ENCODE measurements at regions of chr19 and their contacts with region 1.

Region 1: DNA sequence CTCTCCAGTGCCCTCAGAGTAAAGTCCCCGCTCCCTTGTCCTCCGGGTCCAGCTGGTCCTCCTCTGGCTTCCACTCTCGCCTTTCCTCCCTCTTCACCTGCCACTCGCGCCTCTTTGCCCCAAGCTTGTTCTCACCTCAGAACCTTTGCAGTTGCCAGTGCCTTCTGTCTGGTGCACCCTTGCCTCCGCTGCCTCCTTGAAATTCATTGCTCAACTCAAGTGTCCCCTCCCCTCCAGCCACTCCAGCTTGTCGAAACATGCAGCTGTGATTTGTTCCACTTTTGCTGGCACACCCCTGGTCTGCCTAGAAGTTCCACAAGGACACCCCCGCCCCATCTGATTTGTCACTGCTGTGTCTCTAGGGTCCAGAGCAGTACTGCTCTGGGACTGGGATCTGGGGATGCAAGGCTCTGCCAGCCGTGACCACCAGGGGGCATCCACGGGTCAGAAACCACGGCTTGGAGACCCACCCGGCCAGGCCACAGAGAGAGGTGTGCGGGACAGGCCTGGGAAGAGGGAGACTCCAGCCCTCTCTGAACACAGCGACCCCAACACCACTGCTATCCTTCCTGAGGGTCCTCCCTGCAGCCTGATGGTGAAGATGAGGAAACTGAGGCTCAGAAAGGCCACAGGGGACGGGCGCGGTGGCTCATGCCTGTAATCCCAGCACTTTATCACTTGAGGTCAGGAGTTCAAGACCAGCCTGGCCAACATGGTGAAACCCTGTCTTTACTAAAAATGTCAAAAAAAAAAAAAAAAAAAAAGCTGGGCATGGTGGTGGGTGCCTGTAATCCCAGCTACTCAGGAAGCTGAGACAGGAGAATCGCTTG is 49.9 kb downstream of the AP1M1 start:
- DNase-seq: peak; percentile 87
- ATAC-seq: peak; percentile 96
- H3K4me3 Mint-ChIP-seq: no peak overlapping the region
- H3K27ac Mint-ChIP-seq: peak overlapping the region; percentile 26
- H3K4me1 Mint-ChIP-seq: peaks cover 21% of the 10 kb centered on the region
- H3K27me3 Mint-ChIP-seq: peaks cover 15% of the 10 kb centered on the region

Region 2: GRCh38 chr19:16262618-16263017 is 15.1 kb after region 1 on chr19:
- CTCF ChIA-PET with region 1: interaction called, 12 read pairs
- POLR2A ChIA-PET with region 1: no interaction called
- DNase-seq: no peak
- ATAC-seq: no peak
- H3K4me3 Mint-ChIP-seq: peak overlapping the region; percentile 63
- H3K27ac Mint-ChIP-seq: peak overlapping the region; percentile 87
- H3K4me1 Mint-ChIP-seq: peaks cover 85% of the 10 kb centered on the region
- H3K27me3 Mint-ChIP-seq: peaks cover 24% of the 10 kb centered on the region

Region 3: GRCh38 chr19:16293118-16294091 is 45.8 kb after region 1 on chr19:
- CTCF ChIA-PET with region 1: no interaction called
- POLR2A ChIA-PET with region 1: no interaction called
- DNase-seq: no peak
- ATAC-seq: no peak
- H3K4me3 Mint-ChIP-seq: no peak overlapping the region
- H3K27ac Mint-ChIP-seq: no peak overlapping the region
- H3K4me1 Mint-ChIP-seq: peaks cover 12% of the 10 kb centered on the region
- H3K27me3 Mint-ChIP-seq: peaks cover 16% of the 10 kb centered on the region

Region 4: GRCh38 chr19:16330368-16330801 is 82.8 kb after region 1 on chr19:
- CTCF ChIA-PET with region 1: interaction called, 25 read pairs
- POLR2A ChIA-PET with region 1: interaction called, 5 read pairs
- DNase-seq: peak; percentile 94
- ATAC-seq: peak; percentile 69
- H3K4me3 Mint-ChIP-seq: peak overlapping the region; percentile 91
- H3K27ac Mint-ChIP-seq: peak overlapping the region; percentile 82
- H3K4me1 Mint-ChIP-seq: peaks cover 64% of the 10 kb centered on the region
- H3K27me3 Mint-ChIP-seq: peaks cover 25% of the 10 kb centered on the region

Region 5: DNA sequence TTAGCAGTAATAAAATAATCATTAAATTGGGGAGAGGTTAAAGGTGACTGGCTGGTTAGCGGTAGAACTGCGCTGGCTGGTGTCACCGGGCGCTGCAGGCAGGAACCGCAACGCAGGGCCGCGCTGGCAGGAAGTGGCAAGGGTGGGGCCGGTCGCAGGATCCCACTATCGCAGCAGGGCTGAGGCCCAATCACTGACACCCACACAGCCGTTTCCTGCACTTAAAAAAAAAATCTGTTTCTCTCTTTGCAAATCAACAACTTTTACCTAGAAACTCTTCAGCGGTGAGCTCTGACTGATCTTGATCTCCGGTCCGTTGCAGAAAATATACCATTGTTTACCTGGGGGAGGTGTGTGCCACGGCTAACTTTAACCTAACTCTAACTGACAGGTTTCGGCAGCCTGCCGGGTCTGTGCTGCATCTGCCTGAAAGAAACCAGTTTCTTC is 124.0 kb after region 1 on chr19:
- CTCF ChIA-PET with region 1: interaction called, 27 read pairs
- POLR2A ChIA-PET with region 1: interaction called, 4 read pairs
- DNase-seq: peak; percentile 96
- ATAC-seq: peak; percentile 70
- H3K4me3 Mint-ChIP-seq: no peak overlapping the region
- H3K27ac Mint-ChIP-seq: no peak overlapping the region
- H3K4me1 Mint-ChIP-seq: peaks cover 40% of the 10 kb centered on the region
- H3K27me3 Mint-ChIP-seq: peaks cover 3% of the 10 kb centered on the region

Region 6: DNA sequence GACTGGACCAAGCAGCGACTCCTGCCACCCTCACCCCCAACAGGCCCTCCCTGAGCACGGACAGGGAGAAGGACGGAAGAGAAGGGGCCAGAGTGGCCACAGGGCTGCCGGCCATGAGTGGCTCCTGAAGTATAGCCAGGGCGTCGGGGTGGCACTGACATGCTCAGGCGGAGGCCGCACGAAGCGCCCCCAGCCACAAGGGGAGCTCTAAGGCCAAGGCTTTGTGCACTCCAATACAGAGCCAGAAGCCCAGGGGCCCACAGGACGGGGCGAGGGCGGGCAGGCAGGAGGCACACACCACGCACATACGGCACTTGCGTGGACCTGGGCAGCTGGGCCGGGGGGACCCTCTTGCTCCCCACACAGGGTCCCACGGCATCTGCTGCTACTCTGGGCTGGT is 129.1 kb after region 1 on chr19:
- CTCF ChIA-PET with region 1: interaction called, 120 read pairs
- POLR2A ChIA-PET with region 1: interaction called, 4 read pairs
- DNase-seq: peak; percentile 46
- ATAC-seq: no peak
- H3K4me3 Mint-ChIP-seq: no peak overlapping the region
- H3K27ac Mint-ChIP-seq: peak overlapping the region; percentile 44
- H3K4me1 Mint-ChIP-seq: peaks cover 54% of the 10 kb centered on the region
- H3K27me3 Mint-ChIP-seq: no peaks in the 10 kb centered on the region

Region 7: GRCh38 chr19:16417660-16418596 is 170.4 kb after region 1 on chr19:
- CTCF ChIA-PET with region 1: interaction called, 44 read pairs
- POLR2A ChIA-PET with region 1: no interaction called
- DNase-seq: peak; percentile 72
- ATAC-seq: peak; percentile 94
- H3K4me3 Mint-ChIP-seq: no peak overlapping the region
- H3K27ac Mint-ChIP-seq: no peak overlapping the region
- H3K4me1 Mint-ChIP-seq: peaks cover 11% of the 10 kb centered on the region
- H3K27me3 Mint-ChIP-seq: no peaks in the 10 kb centered on the region